OCI-LY7 (cell line): ENCODE measurements at regions of chr2 and their contacts with region 1.

Region 1: GRCh38 chr2:37013315-37013641 is 46.9 kb upstream of the STRN start:
- DNase-seq: no peak
- H3K4me3 ChIP-seq: peak overlapping the region; percentile 42
- H3K27ac ChIP-seq: peak overlapping the region; percentile 71
- H3K4me1 ChIP-seq: peaks cover 35% of the 10 kb centered on the region
- CTCF ChIP-seq: no peak

Region 2: DNA sequence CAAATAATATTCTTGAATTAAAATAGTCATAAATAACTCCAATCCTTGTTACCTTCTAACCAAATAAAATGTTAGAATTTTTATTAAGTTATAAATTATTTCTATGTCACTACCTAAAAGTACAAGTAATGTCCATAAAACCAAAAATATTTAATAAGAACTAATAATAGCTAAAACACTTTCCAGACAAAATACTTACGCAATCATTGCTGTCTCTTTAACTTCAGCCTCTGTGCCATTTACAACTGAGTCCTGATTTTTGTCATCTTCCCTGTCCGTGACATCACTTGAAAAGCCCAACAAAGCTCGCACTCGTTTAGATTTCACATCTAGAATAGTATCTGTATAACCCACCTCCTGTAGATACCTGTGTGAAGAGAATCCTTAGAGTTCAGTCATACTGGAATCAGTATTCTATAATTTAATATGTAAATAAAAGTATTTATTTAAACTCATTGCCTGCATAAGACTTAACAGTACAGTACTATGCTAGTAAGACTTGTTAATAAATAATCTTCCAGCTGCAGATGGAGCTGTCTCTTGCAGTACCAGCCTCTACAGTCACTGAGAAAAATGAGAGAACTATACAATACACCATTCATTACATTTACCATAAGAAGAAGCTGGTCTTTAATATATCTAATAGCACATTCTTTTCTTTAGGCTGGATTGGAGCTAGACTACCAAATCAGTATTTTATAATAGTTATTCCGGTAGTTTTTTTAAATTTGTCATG is 110.7 kb before region 1 on chr2:
- CTCF ChIA-PET with region 1: no interaction called
- POLR2A ChIA-PET with region 1: no interaction called
- intact Hi-C with region 1: no loop called
- DNase-seq: no peak
- H3K4me3 ChIP-seq: no peak overlapping the region
- H3K27ac ChIP-seq: no peak overlapping the region
- H3K4me1 ChIP-seq: no peaks in the 10 kb centered on the region
- CTCF ChIP-seq: no peak

Region 3: DNA sequence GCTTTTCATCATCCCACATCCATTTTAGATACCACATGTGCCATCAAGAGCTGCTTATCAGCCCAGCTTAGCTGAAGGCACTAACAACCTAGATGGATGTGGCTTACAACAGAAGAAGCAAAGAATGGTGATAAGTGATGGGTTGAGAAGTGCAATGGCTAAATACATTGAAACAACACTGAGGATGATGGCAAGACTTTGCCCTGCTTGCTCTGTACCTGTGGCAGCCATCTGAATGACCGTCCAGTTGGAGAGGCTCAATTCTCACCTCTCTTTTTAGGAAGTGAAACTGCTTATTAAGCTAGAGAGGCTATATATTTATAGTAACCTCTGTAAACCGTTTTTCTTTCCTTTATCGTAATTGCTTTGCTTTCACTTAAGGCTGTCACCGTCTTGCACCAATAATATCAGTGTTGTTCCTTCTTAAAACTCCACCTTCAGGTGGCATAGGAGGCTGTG is 76.8 kb after region 1 on chr2:
- CTCF ChIA-PET with region 1: no interaction called
- POLR2A ChIA-PET with region 1: interaction called, 5 read pairs
- intact Hi-C with region 1: loop called (anchors 2 kb)
- DNase-seq: peak; percentile 83
- H3K4me3 ChIP-seq: peak overlapping the region; percentile 25
- H3K27ac ChIP-seq: peak overlapping the region; percentile 82
- H3K4me1 ChIP-seq: peaks cover 68% of the 10 kb centered on the region
- CTCF ChIP-seq: no peak

Region 4: DNA sequence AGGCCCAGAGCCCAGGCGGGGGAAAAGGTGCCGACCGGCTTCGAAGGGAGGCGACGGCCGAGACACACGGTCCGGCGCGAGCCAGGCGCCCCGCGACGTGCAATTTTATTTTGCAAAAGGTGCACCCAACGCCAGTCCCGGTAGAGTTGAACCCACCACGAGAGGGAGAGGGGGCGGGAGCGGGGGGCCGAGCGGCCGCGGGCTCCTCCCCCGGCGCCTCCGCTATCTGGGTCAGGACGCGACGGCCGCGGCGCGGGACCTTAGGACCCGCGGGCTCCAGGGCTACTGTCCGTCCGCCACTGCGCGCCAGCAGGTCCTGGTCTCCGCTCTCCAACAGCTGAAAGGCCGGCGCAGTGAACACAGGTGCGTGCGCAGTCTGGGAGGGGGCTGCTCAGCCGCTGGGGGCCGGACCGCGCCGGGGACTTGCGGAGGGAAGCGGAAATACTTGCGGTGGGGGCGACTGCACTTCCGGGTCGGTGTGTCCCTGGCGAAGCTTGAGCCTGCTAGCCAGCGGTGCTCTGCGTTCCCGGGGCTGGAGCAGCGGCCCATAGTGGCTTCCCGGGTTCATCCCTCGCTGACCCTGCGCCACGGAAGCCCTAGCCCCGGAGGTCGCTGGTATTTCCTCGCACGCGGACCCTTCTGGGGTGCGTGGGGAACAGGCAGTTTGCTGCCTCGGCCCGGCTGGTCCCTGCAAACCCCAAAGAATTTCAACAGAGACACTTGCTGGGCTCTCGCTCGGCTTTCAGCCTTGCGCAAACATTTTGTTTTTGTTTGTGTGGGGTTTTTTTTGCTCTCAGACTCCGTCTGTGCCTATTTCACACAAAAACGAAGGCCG is 912.0 kb after region 1 on chr2 and contains the start of gene RMDN2:
- CTCF ChIA-PET with region 1: no interaction called
- POLR2A ChIA-PET with region 1: no interaction called
- intact Hi-C with region 1: loop called (anchors 5 kb)
- DNase-seq: peak; percentile 86
- H3K4me3 ChIP-seq: peak within 1 kb of the TSS; percentile 77
- H3K27ac ChIP-seq: no peak within 1 kb of the TSS
- H3K4me1 ChIP-seq: peaks cover 20% of the 10 kb centered on the region
- CTCF ChIP-seq: no peak; the same call in 1 of the 2 replicates
- total RNA-seq, gene RMDN2: 0.50 and 5.0 TPM in 2 replicates